ENCODE measurements at regions of chr22 and their contacts with region 1.

Region 1: DNA sequence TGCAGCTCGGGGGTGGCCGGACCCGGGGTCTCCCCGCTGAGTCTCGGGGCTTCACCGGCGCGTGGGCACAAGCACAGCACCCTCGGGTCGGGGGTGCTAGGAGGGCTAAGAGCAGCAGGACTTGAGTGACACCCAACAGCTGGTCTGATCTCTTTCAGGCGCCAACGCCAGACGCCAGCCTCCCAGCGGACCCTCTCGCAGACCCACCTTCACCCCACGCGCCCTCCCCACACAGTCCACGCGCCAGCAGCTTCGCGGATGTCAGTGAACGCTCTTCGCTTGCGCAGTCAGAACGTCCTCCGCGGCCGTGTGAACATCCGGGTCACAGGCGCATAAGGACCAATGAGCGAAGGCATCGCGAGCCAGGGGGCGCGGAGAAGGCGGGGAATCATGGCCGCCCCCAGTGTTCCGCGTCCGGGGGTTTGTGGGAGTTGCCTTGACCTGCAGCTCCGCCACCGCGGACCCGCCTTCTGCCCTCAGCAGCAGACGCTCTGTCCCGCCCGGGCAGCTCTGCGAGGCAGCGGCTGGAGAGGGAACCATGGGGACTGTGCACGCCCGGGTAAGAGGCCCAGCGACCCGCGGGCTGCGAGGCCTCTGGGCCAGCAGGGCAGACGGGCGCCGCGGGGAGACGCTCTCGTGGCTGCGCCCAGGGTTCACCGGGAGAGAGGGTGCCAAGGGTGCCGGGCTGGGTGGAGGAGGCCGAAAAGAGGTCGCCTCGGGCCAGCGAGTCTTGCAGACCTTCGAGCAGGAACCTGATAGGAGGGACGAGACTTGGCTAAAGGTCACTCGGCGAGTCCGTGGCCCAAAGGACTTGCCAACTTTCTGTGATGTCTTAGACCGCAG is at the start of gene SAMM50:
- DNase-seq: peak; percentile 92
- H3K4me3 Mint-ChIP-seq: peak within 1 kb of the TSS; percentile 88
- H3K27ac Mint-ChIP-seq: peak within 1 kb of the TSS; percentile 72
- H3K4me1 Mint-ChIP-seq: peaks cover 36% of the 10 kb centered on the region
- H3K27me3 Mint-ChIP-seq: no peaks in the 10 kb centered on the region
- total RNA-seq, gene SAMM50: 35.9 to 37.8 TPM

Region 2: GRCh38 chr22:43812149-43812842 is 143.0 kb before region 1 on chr22 and contains the start of gene EFCAB6:
- CTCF ChIA-PET with region 1: no interaction called
- intact Hi-C with region 1: loop called (anchors 2 kb)
- DNase-seq: peak; percentile 96
- H3K4me3 Mint-ChIP-seq: peak within 1 kb of the TSS; percentile 89
- H3K27ac Mint-ChIP-seq: peak within 1 kb of the TSS; percentile 81
- H3K4me1 Mint-ChIP-seq: peaks cover 19% of the 10 kb centered on the region
- H3K27me3 Mint-ChIP-seq: no peaks in the 10 kb centered on the region
- total RNA-seq, gene EFCAB6: 0.15 to 0.21 TPM

Region 3: DNA sequence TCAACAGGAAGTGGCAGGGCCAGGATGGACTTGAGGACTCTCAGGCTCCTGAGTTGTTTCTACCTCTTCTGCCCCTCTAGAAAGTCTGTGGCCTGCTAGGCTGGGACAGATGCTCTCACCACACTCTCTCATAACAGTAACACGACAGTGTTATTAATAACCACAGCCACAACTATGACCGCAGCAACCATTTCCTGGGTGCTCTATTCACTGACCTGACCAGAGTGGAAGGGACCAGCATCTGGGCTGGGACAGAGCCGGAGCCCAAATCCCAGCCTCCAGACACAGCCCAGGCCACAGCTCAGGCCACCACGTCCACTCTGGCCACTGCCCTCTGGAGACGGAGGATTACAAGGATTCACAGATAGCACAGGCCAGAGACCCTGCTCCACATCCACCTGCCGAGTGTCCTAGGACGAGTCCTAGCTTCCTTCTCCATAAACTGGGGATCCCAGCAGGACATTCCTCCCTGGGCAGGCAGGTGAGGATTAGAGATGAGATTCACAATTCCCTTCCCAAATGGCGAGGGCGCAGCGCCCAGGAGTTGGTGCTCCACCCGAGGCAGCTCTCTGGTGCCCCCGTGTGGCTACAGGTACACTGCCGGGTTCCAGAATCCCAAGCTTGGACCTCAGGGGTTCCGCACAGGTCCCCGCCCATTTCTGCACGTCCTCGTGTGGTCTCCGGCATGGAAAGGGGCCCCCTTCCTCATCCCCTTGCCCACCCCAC is 70.5 kb before region 1 on chr22:
- CTCF ChIA-PET with region 1: interaction called, 12 read pairs
- intact Hi-C with region 1: no loop called
- DNase-seq: peak; percentile 60
- H3K4me3 Mint-ChIP-seq: no peak overlapping the region
- H3K27ac Mint-ChIP-seq: no peak overlapping the region
- H3K4me1 Mint-ChIP-seq: no peaks in the 10 kb centered on the region
- H3K27me3 Mint-ChIP-seq: peaks cover 25% of the 10 kb centered on the region

Region 4: DNA sequence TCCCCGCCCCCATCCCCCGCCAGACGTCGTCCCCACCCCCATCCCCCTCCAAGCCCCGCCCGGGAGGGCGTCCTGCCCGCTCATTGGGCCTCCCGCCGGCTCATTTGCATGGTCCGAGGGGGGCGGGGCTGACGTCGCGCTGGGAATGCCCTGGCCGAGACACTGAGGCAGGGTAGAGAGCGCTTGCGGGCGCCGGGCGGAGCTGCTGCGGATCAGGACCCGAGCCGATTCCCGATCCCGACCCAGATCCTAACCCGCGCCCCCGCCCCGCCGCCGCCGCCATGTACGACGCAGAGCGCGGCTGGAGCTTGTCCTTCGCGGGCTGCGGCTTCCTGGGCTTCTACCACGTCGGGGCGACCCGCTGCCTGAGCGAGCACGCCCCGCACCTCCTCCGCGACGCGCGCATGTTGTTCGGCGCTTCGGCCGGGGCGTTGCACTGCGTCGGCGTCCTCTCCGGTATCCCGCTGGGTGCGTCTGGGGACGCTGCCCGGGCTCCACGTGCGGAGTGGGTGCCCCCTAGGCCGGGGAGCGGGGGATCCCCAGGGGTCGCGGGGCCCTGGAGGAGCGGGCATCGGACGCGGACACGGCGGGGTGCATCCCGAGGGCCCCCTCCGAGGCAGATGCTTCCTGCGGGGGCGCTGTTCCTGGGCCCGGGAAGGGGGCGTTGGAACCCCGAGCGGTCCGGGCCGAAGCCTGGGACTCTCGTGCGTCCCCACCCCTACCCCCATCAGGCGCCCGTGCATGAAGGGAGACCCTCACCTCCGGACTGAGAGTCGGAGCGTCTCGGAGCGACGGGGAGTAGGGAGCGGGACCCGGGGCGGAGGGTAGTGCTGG is 31.4 kb before region 1 on chr22 and contains the start of gene PNPLA3:
- CTCF ChIA-PET with region 1: no interaction called
- intact Hi-C with region 1: loop called (anchors 2 kb)
- DNase-seq: peak; percentile 83
- H3K4me3 Mint-ChIP-seq: peak within 1 kb of the TSS; percentile 67
- H3K27ac Mint-ChIP-seq: no peak within 1 kb of the TSS
- H3K4me1 Mint-ChIP-seq: peaks cover 4% of the 10 kb centered on the region
- H3K27me3 Mint-ChIP-seq: peaks cover 9% of the 10 kb centered on the region
- total RNA-seq, gene PNPLA3: 0.29 to 0.77 TPM

Measured in activated naive CD4-positive, alpha-beta T cell treated with anti-CD3 and anti-CD28 coated beads for 36 hours (primary cell).